AG04449 (cell line): ENCODE measurements at regions of chr3 and their contacts with region 1.

Region 1: DNA sequence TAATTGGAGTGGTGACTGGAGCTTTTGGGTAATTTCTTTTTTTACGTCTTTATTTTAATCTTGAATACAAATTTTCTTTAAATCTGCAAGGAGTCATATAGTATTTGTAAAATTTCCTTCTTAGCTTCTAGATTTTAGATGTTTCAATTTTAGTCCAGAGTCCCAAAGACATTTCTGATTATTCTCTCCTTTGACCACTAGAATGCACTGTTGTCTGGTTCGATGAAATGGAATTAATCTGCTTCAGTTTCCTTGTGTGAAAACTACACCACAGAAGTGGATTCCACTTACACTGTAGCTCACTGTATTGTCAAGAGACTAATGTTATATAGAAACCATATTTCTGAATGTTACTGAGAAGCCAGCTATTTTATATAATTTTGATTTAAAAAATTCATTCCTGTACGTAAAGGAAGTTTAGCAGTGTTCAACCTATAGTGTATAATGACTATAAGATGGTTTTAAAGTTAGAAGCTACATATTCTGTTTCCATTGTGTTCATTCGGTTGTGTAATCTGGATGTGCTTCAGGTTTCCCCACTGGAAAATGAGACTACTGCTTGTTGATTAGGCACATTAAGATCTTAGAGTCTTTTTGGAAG is 6.1 kb downstream of the GRAMD1C start:
- DNase-seq: no peak
- H3K4me3 ChIP-seq: no peak overlapping the region
- CTCF ChIP-seq: peak; percentile 44

Region 2: GRCh38 chr3:113812854-113813253 is 31.9 kb before region 1 on chr3:
- CTCF ChIA-PET with region 1: no interaction called
- POLR2A ChIA-PET with region 1: no interaction called
- DNase-seq: no peak
- H3K4me3 ChIP-seq: no peak overlapping the region
- CTCF ChIP-seq: no peak

Region 3: GRCh38 chr3:113825090-113825489 is 19.6 kb before region 1 on chr3:
- CTCF ChIA-PET with region 1: interaction called, 10 read pairs
- POLR2A ChIA-PET with region 1: no interaction called
- DNase-seq: no peak
- H3K4me3 ChIP-seq: no peak overlapping the region
- CTCF ChIP-seq: peak; percentile 16

Region 4: DNA sequence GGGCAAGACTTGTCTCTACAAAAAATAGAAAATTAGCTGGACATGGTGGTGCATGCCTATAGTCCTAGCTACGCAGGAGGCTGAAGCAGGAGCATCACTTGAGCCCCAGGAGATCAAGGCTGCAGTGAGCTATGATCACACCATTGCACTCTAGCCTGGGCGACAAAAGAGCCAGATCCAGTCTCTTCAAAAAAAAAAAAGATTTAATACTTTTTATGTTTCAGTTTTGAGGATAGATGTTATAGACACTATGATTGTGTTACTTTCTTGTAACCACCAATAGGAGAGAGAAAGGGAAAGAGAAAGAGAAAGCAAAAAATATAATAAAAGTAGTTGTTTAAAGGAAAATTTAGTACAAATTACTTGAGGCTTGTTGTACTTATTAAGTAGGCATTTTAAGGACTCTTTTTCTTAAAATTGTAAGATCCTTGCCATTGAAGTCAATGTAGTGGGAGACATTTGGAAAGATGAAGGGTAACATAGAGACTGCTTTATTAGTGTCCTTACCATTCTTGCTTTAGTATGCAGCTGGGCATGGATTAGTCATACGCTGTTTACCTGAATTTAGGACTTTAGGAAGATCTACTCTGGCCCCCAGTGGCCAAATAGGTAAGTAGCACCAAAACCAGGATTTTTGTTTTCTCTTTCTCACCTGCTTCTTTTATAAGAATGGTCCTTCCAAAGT is 68.0 kb after region 1 on chr3:
- CTCF ChIA-PET with region 1: interaction called, 25 read pairs
- POLR2A ChIA-PET with region 1: no interaction called
- DNase-seq: no peak
- H3K4me3 ChIP-seq: no peak overlapping the region
- CTCF ChIP-seq: peak; percentile 51

Region 5: DNA sequence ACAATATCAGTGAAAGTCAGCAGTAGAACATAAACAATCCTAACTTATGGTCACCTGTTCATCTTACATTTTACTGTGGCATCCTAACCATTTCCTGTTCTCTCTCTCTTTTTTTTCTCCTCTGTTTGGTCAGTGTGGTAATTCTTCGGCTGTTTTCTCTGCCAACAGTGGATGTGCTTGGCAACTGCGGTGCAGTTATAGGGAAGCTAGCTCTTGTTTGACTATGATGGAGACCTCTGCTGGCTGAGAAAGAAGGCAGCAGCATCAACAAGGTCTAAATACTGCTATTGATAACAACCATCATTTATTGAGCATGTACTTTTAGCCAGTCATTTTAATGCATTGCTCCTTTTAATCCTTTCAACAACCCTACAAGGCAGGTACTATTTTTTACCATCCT is 334.9 kb after region 1 on chr3:
- CTCF ChIA-PET with region 1: interaction called, 21 read pairs
- POLR2A ChIA-PET with region 1: no interaction called
- DNase-seq: no peak
- H3K4me3 ChIP-seq: no peak overlapping the region
- CTCF ChIP-seq: peak; percentile 38